WTC11 (cell line): ENCODE measurements at regions of chr20 and their contacts with region 1.

Region 1: DNA sequence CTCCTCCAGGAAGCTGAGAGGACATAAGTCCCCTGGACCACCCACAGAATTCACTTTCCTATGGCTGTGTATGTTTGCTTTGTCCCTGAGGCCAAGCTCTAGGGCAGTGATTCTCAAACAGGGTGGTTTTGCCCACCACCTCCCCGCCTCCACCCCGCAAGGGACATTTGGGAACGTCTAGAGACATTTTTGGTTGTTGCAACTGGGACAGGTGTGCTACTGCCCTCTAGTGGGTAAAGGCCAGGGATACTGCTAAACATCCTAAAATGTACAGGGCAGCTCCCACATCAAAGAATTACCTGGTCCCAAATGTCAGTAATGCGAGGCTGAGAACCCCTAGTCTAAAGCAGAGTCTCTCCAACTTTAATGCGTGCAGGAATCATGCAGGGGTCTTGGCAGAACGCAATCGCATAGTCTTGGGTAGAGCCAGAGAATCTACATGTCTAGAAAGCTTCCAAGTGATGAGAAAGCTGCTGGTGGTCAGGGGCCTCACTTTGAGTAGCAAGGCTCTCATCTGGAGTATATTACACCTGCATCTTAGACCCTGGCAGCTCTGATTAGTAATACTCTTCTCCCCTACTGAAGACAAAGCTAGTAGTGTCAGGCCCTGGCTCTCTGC is 5.1 kb downstream of the KCNS1 start:
- DNase-seq: peak; percentile 70
- ATAC-seq: peak; percentile 50
- H3K4me3 Mint-ChIP-seq: no peak overlapping the region
- H3K27ac Mint-ChIP-seq: no peak overlapping the region
- H3K4me1 Mint-ChIP-seq: peaks cover 12% of the 10 kb centered on the region
- H3K27me3 Mint-ChIP-seq: peaks cover 48% of the 10 kb centered on the region
- CTCF ChIP-seq: peak; percentile 66; the same call in 1 of the 2 replicates

Region 2: GRCh38 chr20:45011108-45011526 is 84.7 kb before region 1 on chr20:
- CTCF ChIA-PET with region 1: interaction called, 61 read pairs
- POLR2A ChIA-PET with region 1: interaction called, 3 read pairs
- DNase-seq: peak; percentile 57
- ATAC-seq: peak; percentile 77
- H3K4me3 Mint-ChIP-seq: no peak overlapping the region
- H3K27ac Mint-ChIP-seq: no peak overlapping the region
- H3K4me1 Mint-ChIP-seq: peaks cover 16% of the 10 kb centered on the region
- H3K27me3 Mint-ChIP-seq: no peaks in the 10 kb centered on the region
- CTCF ChIP-seq: peak; percentile 44

Region 3: DNA sequence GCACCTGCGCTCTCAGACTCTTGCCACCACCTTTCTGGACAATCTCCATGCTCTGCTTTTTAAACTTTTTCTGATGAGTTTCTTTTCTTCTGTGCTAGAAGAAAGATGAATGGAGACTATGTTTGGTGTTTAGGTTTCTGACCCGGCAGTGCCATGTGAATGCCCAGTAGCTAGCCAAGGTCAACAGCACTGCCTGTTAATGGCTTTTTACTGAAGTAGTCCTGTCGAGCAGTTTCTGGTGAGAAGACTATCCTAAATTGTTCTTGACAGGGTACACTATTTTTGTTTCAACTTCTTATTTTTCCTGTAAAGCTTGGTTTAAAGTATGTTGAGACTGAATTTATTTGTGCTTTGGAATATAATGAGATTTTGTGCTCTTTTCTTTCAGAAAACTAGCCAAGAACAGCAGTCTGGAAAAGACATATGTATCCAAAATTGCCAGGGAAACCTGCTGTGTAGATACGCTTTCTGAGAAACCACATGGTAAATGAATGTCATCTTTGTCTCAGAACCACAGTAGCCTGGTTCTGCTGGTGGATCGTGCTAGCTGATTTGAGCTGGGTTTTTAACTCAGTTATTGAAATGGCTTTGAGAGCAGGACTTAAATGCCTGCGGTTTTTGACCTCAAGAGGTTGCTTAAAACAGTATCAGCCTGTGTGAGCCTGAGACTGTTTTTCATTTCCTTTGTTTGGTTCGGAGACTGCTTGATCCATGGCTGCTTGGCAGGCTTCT is 43.0 kb before region 1 on chr20:
- CTCF ChIA-PET with region 1: interaction called, 20 read pairs
- POLR2A ChIA-PET with region 1: no interaction called
- DNase-seq: no peak
- ATAC-seq: no peak
- H3K4me3 Mint-ChIP-seq: no peak overlapping the region
- H3K27ac Mint-ChIP-seq: peak overlapping the region; percentile 51; the same call in 1 of the 2 replicates
- H3K4me1 Mint-ChIP-seq: peaks cover 30% of the 10 kb centered on the region
- H3K27me3 Mint-ChIP-seq: no peaks in the 10 kb centered on the region
- CTCF ChIP-seq: no peak

Region 4: GRCh38 chr20:45111799-45112471 is 16.1 kb after region 1 on chr20:
- CTCF ChIA-PET with region 1: interaction called, 165 read pairs
- POLR2A ChIA-PET with region 1: no interaction called
- DNase-seq: peak; percentile 52
- ATAC-seq: peak; percentile 54
- H3K4me3 Mint-ChIP-seq: no peak overlapping the region
- H3K27ac Mint-ChIP-seq: no peak overlapping the region
- H3K4me1 Mint-ChIP-seq: peaks cover 8% of the 10 kb centered on the region; the same call in 1 of the 2 replicates
- H3K27me3 Mint-ChIP-seq: peaks cover 4% of the 10 kb centered on the region; the same call in 1 of the 2 replicates
- CTCF ChIP-seq: peak; percentile 71

Region 5: DNA sequence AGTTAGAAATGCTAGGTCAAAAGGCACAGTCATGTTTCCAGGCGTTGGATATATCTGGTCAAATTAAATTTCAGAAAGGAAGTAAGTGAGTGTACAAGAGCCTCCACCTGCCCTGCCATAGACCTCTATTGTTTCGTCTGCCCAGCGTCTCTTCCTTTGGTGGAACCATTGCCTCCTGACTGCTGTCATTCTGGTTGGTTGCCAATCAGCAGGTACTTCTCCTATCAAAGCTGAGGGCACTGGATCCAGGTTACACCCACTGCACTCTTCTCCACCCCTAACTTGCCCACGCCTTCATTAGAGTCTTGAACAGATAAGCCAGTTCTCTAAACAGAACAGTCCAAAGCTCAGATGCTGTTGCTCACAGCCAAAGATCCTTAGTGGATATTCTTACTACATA is 21.7 kb after region 1 on chr20:
- CTCF ChIA-PET with region 1: interaction called, 165 read pairs
- POLR2A ChIA-PET with region 1: no interaction called
- DNase-seq: no peak
- ATAC-seq: peak; percentile 44; the same call in 1 of the 2 replicates
- H3K4me3 Mint-ChIP-seq: no peak overlapping the region
- H3K27ac Mint-ChIP-seq: no peak overlapping the region
- H3K4me1 Mint-ChIP-seq: peaks cover 8% of the 10 kb centered on the region; the same call in 1 of the 2 replicates
- H3K27me3 Mint-ChIP-seq: peaks cover 14% of the 10 kb centered on the region; the same call in 1 of the 2 replicates
- CTCF ChIP-seq: no peak